Activated CD4-positive, alpha-beta T cell treated with anti-CD3 and anti-CD28 coated beads, Interleukin-2, amount 10 ng/mL, durations not matched to agents 24 days and 14 days (primary cell): ENCODE measurements at regions of chr3 and their contacts with region 1.

Region 1: DNA sequence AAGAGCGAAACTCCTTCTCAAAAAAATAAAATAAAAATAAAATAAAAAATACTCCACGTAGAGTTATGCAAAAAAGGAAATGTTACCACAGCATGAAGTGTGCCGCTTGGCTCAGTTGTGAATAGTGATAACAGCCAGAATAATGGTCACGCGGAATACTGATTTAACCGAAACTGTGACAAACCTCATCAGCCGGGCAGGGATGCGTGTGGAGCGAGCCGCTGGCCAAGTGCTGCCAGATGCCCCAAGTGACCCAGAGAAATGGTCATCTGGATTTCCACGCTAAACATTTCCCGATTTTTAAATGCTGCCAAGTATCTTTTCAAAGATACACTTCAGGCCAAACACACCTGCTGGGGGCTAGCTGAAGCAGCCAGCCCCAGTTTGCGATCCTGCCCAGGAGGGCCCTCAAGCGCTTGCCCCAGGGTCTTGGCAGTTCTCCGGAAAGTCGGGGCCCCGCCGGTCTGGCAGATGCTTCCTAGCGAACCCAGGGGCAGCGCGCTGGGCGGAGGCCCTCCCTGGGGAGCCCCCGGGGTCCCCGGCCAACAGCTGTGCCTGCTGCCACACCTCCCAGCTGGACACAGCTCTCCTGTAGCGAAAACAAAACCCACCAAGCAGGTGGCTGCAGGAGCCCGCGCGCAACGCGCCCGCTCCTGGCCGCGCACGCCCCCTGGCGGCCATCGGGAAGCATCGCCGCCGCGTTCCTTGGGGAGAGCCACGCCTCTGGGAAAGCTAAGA is 35.1 kb downstream of the CMTM6 start:
- DNase-seq: peak; percentile 94
- H3K4me3 Mint-ChIP-seq: no peak overlapping the region
- H3K27ac Mint-ChIP-seq: no peak overlapping the region
- H3K4me1 Mint-ChIP-seq: peaks cover 28% of the 10 kb centered on the region
- H3K27me3 Mint-ChIP-seq: no peaks in the 10 kb centered on the region

Region 2: DNA sequence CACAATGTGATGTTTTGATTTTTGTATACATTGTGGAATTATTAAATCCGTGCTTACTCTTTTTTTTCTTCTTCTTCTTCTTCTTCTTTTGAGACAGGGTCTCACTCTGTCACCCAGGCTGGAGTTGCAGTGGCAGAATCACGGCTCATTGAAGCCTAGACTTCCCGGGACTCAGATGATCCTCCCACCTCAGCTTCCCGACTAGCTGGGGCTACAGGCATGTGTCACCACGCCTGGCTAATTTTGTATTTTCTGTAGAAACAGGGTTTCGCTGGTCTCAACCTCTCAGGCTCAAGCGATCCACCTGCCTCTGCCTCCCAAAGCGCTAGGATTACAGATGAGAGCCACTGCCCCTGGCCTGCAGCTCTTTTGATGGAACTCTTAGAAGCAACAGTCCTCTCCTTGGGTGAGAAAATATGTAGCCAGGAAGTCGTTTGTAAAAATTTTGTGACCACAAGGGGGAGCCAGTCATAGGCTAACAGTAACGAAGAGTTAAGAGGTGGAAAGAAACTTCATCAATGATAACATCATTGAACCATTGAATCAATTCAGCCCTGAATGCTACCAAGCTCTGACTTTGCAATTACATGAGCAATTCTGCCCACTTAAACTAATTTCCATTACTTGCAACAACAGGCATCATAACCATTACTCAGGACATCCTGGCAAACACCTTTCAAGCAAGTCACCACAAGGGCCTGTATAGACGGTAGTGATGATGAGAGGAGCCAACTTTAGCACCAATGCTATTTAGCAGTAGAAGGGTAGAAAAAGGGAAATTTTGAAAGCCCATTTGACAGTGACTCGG is 92.5 kb before region 1 on chr3:
- intact Hi-C with region 1: loop called (anchors 1 kb)
- DNase-seq: peak; percentile 93
- H3K4me3 Mint-ChIP-seq: no peak overlapping the region
- H3K27ac Mint-ChIP-seq: peak overlapping the region; percentile 60
- H3K4me1 Mint-ChIP-seq: peaks cover 24% of the 10 kb centered on the region
- H3K27me3 Mint-ChIP-seq: peaks cover 8% of the 10 kb centered on the region